Activated T-helper 2 cell treated with anti-CD3 and anti-CD28 coated beads, Interferon-gamma antibody, Interleukin-2, Interleukin-4, amounts not matched to agents 10 μg/mL and 5 μg/mL and 100 μg/mL, durations not matched to agents 14 hours and 24 hours and 36 hours (primary cell): ENCODE measurements at regions of chr5 and their contacts with region 1.

Region 1: GRCh38 chr5:67209142-67209771 is 12.7 kb upstream of the CD180 start:
- DNase-seq: peak; percentile 57
- H3K4me3 Mint-ChIP-seq: no peak overlapping the region
- H3K27ac Mint-ChIP-seq: peak overlapping the region; percentile 26
- H3K4me1 Mint-ChIP-seq: peaks cover 61% of the 10 kb centered on the region
- H3K27me3 Mint-ChIP-seq: no peaks in the 10 kb centered on the region

Region 2: GRCh38 chr5:66724349-66725139 is 484.7 kb before region 1 on chr5:
- intact Hi-C with region 1: no loop called
- DNase-seq: no peak
- H3K4me3 Mint-ChIP-seq: no peak overlapping the region
- H3K27ac Mint-ChIP-seq: no peak overlapping the region
- H3K4me1 Mint-ChIP-seq: no peaks in the 10 kb centered on the region
- H3K27me3 Mint-ChIP-seq: peaks cover 31% of the 10 kb centered on the region

Region 3: GRCh38 chr5:66814146-66814991 is 394.9 kb before region 1 on chr5:
- intact Hi-C with region 1: loop called (anchors 1 kb)
- DNase-seq: no peak
- H3K4me3 Mint-ChIP-seq: no peak overlapping the region
- H3K27ac Mint-ChIP-seq: no peak overlapping the region
- H3K4me1 Mint-ChIP-seq: peaks cover 8% of the 10 kb centered on the region
- H3K27me3 Mint-ChIP-seq: peaks cover 36% of the 10 kb centered on the region

Region 4: DNA sequence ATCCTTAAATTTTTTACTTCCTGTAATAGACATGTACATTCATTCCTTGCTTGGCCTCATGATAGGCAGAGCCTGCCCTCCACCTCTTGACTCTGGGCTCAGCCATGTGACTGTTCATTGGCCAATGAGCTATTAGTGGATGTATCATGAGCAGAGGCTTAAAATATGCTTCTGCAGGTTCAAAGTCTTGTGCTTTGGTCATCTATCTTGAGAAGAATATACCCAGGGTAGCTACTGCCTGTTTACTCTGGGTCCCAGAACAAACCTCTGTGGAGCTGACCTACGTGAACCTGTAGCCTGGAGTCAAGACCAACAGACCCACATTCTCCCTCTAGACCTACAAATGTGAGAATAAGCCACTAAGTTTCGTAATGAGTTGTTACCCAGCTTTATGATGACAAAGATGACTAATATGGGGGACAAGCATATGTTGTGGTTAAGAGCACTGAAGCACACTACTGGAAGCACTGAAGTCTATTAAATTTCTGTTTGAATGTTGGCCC is 368.7 kb before region 1 on chr5:
- intact Hi-C with region 1: loop called (anchors 5 kb)
- DNase-seq: peak; percentile 46
- H3K4me3 Mint-ChIP-seq: peak overlapping the region; percentile 26
- H3K27ac Mint-ChIP-seq: peak overlapping the region; percentile 79
- H3K4me1 Mint-ChIP-seq: peaks cover 57% of the 10 kb centered on the region
- H3K27me3 Mint-ChIP-seq: no peaks in the 10 kb centered on the region

Region 5: GRCh38 chr5:66960369-66961137 is 248.7 kb before region 1 on chr5:
- intact Hi-C with region 1: no loop called
- DNase-seq: no peak
- H3K4me3 Mint-ChIP-seq: no peak overlapping the region
- H3K27ac Mint-ChIP-seq: no peak overlapping the region
- H3K4me1 Mint-ChIP-seq: no peaks in the 10 kb centered on the region
- H3K27me3 Mint-ChIP-seq: peaks cover 9% of the 10 kb centered on the region

Region 6: DNA sequence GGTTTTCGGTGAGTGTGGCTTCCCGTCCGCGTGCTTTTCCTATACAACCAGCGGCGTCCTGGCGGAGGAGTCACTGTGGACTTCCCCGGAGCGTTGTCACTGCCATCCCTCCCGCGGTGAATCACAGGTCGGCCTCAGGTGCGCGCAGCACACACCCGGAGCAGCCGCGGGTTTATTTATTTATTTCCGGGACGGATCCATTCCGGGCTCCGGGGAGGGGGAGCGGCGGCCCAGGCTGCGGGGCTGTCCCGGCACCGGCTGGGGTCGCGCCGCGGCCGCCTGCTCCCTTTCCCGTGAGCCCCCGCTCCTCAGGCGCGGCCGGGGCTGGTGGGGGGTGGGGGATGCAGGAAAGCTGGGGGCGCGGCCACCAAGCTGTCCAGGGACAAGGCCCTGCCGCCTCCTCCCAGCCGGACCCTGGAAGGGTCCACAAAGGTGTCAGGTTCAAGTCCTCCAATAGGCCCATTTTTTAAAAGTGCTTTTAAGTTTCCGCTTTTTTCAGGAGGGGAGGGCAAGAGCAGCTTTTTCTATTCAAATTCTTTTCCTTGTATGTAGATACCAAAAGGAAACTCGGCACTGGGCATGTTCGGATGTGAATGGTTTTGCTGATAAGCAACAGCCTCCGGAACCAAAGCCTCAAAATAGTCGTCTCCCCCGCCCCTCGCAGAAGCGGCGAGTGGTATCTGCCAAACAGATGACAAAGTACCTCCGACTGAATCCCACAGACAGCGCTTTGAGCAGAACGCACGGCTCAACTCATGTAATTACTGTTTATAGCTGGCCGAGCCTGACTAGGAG is 205.1 kb before region 1 on chr5:
- intact Hi-C with region 1: loop called (anchors 2 kb)
- DNase-seq: peak; percentile 85
- H3K4me3 Mint-ChIP-seq: peak overlapping the region; percentile 82
- H3K27ac Mint-ChIP-seq: peak overlapping the region; percentile 82
- H3K4me1 Mint-ChIP-seq: peaks cover 56% of the 10 kb centered on the region
- H3K27me3 Mint-ChIP-seq: peaks cover 17% of the 10 kb centered on the region

Region 7: DNA sequence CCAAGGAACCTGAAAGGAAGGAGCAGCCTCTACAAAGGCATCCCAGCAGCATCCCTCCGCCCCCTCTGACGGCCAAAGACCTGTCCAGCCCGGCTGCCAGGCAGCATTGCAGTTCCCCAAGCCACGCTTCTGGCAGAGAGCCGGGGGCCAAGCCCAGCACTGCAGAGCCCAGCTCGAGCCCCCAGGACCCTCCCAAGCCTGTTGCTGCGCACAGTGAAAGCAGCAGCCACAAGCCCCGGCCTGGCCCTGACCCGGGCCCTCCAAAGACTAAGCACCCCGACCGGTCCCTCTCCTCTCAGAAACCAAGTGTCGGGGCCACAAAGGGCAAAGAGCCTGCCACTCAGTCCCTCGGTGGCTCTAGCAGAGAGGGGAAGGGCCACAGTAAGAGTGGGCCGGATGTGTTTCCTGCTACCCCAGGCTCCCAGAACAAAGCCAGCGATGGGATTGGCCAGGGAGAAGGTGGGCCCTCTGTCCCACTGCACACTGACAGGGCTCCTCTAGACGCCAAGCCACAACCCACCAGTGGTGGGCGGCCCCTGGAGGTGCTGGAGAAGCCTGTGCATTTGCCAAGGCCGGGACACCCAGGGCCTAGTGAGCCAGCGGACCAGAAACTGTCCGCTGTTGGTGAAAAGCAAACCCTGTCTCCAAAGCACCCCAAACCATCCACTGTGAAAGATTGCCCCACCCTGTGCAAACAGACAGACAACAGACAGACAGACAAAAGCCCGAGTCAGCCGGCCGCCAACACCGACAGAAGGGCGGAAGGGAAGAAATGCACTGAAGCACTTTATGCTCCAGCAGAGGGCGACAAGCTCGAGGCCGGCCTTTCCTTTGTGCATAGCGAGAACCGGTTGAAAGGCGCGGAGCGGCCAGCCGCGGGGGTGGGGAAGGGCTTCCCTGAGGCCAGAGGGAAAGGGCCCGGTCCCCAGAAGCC is 43.5 kb before region 1 on chr5:
- intact Hi-C with region 1: loop called (anchors 1 kb)
- DNase-seq: peak; percentile 82
- H3K4me3 Mint-ChIP-seq: peak overlapping the region; percentile 84
- H3K27ac Mint-ChIP-seq: peak overlapping the region; percentile 93
- H3K4me1 Mint-ChIP-seq: peaks cover 49% of the 10 kb centered on the region
- H3K27me3 Mint-ChIP-seq: no peaks in the 10 kb centered on the region

Region 8: DNA sequence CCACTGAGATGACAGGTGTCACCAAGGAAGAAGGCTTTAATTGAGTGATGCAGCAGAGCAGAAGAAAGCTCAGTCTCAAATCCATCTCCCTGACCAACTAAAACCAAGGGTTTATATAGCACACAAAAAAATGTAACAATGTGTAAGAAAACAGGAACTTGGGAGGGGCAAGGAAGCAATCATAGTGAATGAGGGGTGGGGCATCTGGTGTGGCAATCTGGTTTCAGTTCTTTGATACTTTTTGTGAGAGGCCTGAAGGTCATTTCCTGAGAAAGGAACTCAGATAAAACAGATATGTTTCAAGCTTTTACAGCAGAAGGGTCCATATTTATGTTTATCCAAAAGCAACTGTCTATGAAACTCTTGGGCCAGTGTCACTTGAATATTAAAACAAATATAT is 32.3 kb before region 1 on chr5:
- intact Hi-C with region 1: no loop called
- DNase-seq: no peak
- H3K4me3 Mint-ChIP-seq: no peak overlapping the region
- H3K27ac Mint-ChIP-seq: no peak overlapping the region
- H3K4me1 Mint-ChIP-seq: peaks cover 28% of the 10 kb centered on the region
- H3K27me3 Mint-ChIP-seq: no peaks in the 10 kb centered on the region

Region 9: GRCh38 chr5:67255881-67256280 is 46.6 kb after region 1 on chr5:
- intact Hi-C with region 1: no loop called
- DNase-seq: no peak
- H3K4me3 Mint-ChIP-seq: no peak overlapping the region
- H3K27ac Mint-ChIP-seq: no peak overlapping the region
- H3K4me1 Mint-ChIP-seq: peaks cover 2% of the 10 kb centered on the region
- H3K27me3 Mint-ChIP-seq: peaks cover 12% of the 10 kb centered on the region

Region 10: DNA sequence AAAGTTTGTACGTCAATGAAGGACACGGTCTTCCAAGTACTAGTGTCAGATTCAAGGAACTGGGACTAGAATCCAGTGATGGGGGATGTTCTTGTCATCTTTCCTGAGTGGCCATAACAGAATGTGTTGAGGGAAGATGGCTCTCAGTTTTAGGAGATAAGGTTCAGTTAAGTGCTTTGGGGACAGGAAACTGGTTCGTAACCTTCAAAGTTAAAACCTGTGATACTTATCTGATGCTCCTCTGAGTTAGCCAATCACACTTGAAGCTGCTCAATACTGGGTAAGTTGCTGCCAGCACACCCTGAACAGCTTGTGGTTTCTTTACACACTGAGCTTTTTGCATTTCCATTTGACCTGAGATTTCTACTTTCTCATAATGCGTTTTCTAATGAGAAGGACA is 1070.7 kb after region 1 on chr5:
- intact Hi-C with region 1: loop called (anchors 5 kb)
- DNase-seq: peak; percentile 61
- H3K4me3 Mint-ChIP-seq: peak overlapping the region; percentile 83
- H3K27ac Mint-ChIP-seq: peak overlapping the region; percentile 87
- H3K4me1 Mint-ChIP-seq: peaks cover 81% of the 10 kb centered on the region
- H3K27me3 Mint-ChIP-seq: no peaks in the 10 kb centered on the region